Activated CD4-positive, alpha-beta T cell treated with anti-CD3 and anti-CD28 coated beads, Interleukin-2, amount 10 ng/mL, durations not matched to agents 24 days and 14 days (primary cell): ENCODE measurements at regions of chr13 and their contacts with region 1.

Region 1: GRCh38 chr13:99656092-99656745 is 154.9 kb downstream of the TM9SF2 start:
- DNase-seq: peak; percentile 95
- H3K4me3 Mint-ChIP-seq: peak overlapping the region; percentile 77
- H3K27ac Mint-ChIP-seq: peak overlapping the region; percentile 50
- H3K4me1 Mint-ChIP-seq: peaks cover 35% of the 10 kb centered on the region
- H3K27me3 Mint-ChIP-seq: peaks cover 15% of the 10 kb centered on the region

Region 2: GRCh38 chr13:99606324-99607066 is 49.7 kb before region 1 on chr13:
- intact Hi-C with region 1: no loop called
- DNase-seq: peak; percentile 96
- H3K4me3 Mint-ChIP-seq: peak within 1 kb of the TSS; percentile 87
- H3K27ac Mint-ChIP-seq: peak within 1 kb of the TSS; percentile 86
- H3K4me1 Mint-ChIP-seq: peaks cover 18% of the 10 kb centered on the region
- H3K27me3 Mint-ChIP-seq: no peaks in the 10 kb centered on the region

Region 3: DNA sequence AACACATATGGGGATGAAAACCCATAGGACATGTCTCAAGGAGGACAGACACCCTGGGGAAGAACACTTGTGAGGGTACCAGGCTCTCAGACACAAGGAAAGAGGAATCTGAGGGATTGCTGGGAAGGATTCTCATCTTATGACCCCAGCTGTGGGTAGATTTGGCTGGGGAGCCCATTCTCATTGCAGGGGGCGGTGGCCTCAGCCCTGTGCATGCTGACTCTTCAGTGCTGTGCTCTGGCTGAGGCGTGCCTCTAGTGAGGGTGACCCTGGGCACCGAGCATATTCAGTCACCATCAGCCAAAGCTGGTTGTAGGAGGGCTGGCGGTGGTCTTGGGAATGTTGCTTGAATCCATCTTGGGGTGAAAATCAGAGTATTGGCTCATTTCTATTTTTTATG is 14.2 kb before region 1 on chr13:
- intact Hi-C with region 1: no loop called
- DNase-seq: no peak
- H3K4me3 Mint-ChIP-seq: no peak overlapping the region
- H3K27ac Mint-ChIP-seq: no peak overlapping the region
- H3K4me1 Mint-ChIP-seq: no peaks in the 10 kb centered on the region
- H3K27me3 Mint-ChIP-seq: peaks cover 4% of the 10 kb centered on the region

Region 4: DNA sequence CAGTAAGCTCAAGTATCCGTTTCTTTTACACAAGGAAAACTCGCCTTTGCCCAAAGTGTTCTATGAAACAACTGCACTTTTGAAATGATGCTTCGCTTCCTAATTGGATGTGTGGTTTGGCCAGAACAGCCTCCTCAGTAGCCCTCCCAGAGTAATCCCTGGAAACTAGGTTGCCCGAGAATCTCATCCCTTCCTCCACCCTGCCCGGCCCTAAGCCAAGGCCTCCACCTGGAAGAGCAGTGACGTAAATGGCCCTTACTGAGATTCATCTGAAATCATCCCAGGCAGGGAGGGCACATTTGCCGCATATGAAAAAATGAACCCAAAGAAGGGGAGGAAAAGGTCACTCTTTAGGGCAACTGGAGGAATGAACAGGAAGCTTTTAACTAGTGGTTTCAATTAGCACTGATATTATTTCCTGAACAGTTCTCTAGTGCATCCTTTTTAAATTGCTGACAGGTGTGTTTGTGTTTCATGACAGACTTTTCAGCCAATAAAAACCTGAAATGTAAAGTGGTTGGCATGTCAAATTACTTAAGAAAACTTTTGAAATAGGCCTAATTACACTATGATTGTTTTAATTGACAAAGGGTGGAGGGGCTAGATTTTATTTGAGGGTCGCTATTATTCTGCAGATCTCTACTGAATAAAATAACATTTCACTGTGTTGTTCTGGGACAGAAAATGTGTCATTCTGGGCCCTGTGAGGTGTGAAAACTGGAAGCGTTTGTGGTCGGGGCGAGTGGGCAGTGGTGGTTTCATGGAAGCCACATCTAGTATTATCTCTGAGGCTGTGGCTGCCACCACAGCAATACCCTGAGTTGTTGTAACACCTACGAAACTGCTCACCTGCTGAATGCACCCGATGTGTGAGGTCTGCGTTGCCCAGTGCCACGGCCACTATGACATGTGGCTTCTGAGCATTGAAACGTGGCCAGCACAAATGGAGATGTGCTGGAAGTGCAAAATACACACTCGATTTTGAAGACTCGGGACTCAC is 203.3 kb after region 1 on chr13:
- intact Hi-C with region 1: loop called (anchors 2 kb)
- DNase-seq: peak; percentile 70
- H3K4me3 Mint-ChIP-seq: no peak overlapping the region
- H3K27ac Mint-ChIP-seq: peak overlapping the region; percentile 0
- H3K4me1 Mint-ChIP-seq: peaks cover 9% of the 10 kb centered on the region
- H3K27me3 Mint-ChIP-seq: peaks cover 62% of the 10 kb centered on the region

Region 5: GRCh38 chr13:99995589-99996380 is 339.6 kb after region 1 on chr13:
- intact Hi-C with region 1: loop called (anchors 1 kb)
- DNase-seq: no peak
- H3K4me3 Mint-ChIP-seq: peak overlapping the region; percentile 51
- H3K27ac Mint-ChIP-seq: no peak overlapping the region
- H3K4me1 Mint-ChIP-seq: peaks cover 19% of the 10 kb centered on the region
- H3K27me3 Mint-ChIP-seq: peaks cover 75% of the 10 kb centered on the region

Region 6: GRCh38 chr13:100392709-100393641 is 736.8 kb after region 1 on chr13:
- intact Hi-C with region 1: loop called (anchors 1 kb)
- DNase-seq: peak; percentile 86
- H3K4me3 Mint-ChIP-seq: peak overlapping the region; percentile 70
- H3K27ac Mint-ChIP-seq: peak overlapping the region; percentile 91
- H3K4me1 Mint-ChIP-seq: peaks cover 27% of the 10 kb centered on the region
- H3K27me3 Mint-ChIP-seq: no peaks in the 10 kb centered on the region

Region 7: GRCh38 chr13:100542826-100543156 is 886.6 kb after region 1 on chr13:
- intact Hi-C with region 1: loop called (anchors 10 kb)
- DNase-seq: peak; percentile 66
- H3K4me3 Mint-ChIP-seq: no peak overlapping the region
- H3K27ac Mint-ChIP-seq: no peak overlapping the region
- H3K4me1 Mint-ChIP-seq: peaks cover 15% of the 10 kb centered on the region
- H3K27me3 Mint-ChIP-seq: no peaks in the 10 kb centered on the region

Region 8: DNA sequence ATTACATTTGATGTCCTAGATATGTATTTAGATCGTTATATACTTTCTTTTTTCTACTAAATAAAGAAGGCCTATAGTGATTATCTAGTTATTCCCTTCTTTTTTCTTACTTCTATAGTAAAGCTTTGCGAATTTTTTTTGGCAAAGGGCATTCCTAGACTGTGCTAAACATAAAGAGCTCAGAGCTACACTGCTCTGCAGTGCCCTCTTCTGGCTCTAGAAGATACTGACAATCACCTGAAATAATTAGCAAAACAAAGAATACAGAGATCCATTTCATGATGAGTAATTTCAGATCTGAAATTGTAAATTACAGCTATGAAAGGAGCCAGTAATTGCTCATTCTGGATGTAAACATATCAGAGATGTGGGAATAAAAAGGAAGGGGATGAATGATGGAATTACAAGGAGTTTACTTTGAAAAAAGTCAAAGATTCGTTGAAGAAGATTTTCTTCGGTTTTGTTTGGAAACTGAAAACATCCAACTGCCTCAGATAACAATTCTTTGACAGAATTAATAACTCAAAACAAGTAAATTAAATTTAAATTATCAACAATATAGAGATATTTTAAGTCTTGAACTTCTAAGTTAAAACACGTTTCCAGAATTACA is 1471.6 kb after region 1 on chr13:
- intact Hi-C with region 1: loop called (anchors 1 kb)
- DNase-seq: peak; percentile 71
- H3K4me3 Mint-ChIP-seq: no peak overlapping the region
- H3K27ac Mint-ChIP-seq: no peak overlapping the region
- H3K4me1 Mint-ChIP-seq: peaks cover 2% of the 10 kb centered on the region
- H3K27me3 Mint-ChIP-seq: peaks cover 15% of the 10 kb centered on the region